ENCODE measurements at regions of chr16 and their contacts with region 1.

Region 1: DNA sequence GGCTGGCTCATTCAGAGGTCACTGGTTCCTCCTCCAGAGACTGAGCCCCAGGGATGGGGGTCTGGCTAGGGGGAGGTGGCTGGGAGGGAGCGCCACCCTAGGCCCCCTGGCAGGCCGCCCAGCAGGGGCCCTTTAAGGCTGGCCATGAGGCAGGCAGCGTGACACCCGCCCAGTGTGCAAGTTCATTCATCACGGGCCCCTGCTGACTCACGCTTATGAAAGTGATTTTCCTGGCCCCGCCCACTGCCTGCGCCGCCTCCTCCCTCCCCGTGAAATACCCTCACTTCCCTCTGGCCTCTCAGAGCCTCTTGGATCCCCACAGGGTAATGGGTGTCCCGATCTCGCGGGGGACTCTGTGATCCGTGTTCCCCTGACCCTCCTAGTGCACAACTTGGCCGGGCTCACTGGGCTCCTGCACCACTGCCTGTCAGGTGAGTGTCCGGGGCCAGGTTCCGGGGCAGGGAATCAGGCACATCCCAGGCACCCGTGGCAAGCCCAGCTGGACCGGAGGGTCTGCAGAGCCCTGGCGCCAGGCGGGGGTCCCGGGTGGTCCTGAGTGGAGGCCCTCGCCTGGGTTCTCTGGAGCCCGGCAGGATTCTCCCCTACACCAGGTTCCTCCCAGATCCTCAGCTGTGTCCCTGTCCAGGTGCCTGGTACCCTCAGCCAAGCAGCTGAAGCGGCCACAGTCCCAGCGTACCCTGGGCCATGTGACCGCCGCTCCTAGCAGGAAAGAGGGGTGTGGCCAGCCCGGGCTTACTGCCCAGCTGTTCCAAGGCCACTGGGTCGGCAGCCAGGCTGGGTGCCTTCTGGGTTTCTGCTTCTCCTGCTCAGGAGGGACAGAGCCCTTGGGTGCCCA is at the start of gene OSGIN1:
- DNase-seq: peak; percentile 95 to 97
- ATAC-seq: peak; percentile 87 to 92 (median 90)
- H3K4me3 ChIP-seq: peak within 1 kb of the TSS; percentile 78
- H3K27ac ChIP-seq: peak within 1 kb of the TSS; percentile 96
- H3K4me1 ChIP-seq: peaks cover 29% of the 10 kb centered on the region
- H3K27me3 ChIP-seq: no peaks in the 10 kb centered on the region
- CTCF ChIP-seq: no peak
- total RNA-seq, gene OSGIN1: 10.4 to 33.7 (median 24.9) TPM

Region 2: DNA sequence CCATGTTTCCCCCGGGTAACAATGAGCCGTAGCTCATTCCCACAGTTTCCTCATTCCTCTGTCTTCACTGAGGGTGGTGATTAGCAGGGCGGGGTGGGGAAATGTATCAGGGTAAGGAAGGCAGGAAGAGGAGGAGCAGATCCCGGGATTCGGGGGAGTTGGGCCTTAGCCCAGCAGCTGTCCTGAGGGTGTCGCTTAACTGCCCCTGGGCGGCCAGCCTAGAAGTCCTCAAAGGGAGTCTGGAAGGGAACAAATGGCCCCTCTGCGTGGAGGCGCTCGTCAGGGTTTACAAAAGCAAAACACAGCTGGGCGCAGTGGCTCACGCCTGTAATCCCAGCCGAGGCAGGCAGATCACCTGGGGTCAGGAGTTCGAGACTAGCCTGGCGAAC is 39.9 kb before region 1 on chr16:
- intact Hi-C with region 1: loop called in 1 of 2 experiments (anchors 2 kb)
- DNase-seq: peak; percentile 79 to 88
- ATAC-seq: peak; percentile 72 to 90 (median 81)
- H3K4me3 ChIP-seq: no peak overlapping the region
- H3K27ac ChIP-seq: peak overlapping the region; percentile 88
- H3K4me1 ChIP-seq: peaks cover 22% of the 10 kb centered on the region
- H3K27me3 ChIP-seq: no peaks in the 10 kb centered on the region
- CTCF ChIP-seq: no peak

Region 3: DNA sequence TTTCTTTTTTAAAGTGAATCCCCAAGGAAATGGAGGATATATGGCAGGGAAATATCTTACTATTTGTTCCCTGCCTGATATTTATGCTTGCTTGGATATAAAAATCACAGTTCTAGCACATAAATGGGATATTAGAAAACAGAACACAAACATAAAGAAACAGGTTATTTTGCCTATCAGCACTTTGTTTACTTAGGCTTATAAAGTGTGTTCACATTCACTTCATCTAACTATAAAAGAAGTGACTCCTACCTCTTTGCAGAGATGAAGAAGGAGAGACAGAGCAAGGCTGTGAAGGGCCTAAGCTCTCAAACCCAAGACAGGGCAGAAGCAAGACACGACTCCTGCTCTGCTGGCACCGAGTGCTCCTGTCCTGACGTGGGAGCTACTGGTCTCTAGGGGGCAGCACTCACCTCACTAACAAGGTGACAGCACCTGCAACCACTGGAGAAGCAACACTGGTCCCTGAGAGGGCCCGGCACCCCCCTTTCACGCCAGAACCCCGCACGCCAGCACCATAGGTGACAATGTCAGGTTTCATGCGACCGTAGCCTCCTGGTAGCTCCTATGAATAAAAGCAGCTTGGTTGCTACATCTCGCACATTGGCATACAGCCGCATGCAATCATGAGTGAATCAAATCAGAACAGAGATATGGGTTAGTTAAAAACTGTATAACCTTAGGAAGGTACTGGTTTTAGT is 131.6 kb after region 1 on chr16:
- intact Hi-C with region 1: no loop called
- DNase-seq: peak; percentile 41 to 72
- ATAC-seq: peak; percentile 59 to 83 (median 72)
- H3K4me3 ChIP-seq: no peak overlapping the region
- H3K27ac ChIP-seq: no peak overlapping the region
- H3K4me1 ChIP-seq: peaks cover 10% of the 10 kb centered on the region
- H3K27me3 ChIP-seq: no peaks in the 10 kb centered on the region
- CTCF ChIP-seq: peak; percentile 65

Measured in psoas muscle (tissue), 8 donors.